CD8-positive, alpha-beta T cell (primary cell): ENCODE measurements at regions of chr18 and their contacts with region 1.

Region 1: DNA sequence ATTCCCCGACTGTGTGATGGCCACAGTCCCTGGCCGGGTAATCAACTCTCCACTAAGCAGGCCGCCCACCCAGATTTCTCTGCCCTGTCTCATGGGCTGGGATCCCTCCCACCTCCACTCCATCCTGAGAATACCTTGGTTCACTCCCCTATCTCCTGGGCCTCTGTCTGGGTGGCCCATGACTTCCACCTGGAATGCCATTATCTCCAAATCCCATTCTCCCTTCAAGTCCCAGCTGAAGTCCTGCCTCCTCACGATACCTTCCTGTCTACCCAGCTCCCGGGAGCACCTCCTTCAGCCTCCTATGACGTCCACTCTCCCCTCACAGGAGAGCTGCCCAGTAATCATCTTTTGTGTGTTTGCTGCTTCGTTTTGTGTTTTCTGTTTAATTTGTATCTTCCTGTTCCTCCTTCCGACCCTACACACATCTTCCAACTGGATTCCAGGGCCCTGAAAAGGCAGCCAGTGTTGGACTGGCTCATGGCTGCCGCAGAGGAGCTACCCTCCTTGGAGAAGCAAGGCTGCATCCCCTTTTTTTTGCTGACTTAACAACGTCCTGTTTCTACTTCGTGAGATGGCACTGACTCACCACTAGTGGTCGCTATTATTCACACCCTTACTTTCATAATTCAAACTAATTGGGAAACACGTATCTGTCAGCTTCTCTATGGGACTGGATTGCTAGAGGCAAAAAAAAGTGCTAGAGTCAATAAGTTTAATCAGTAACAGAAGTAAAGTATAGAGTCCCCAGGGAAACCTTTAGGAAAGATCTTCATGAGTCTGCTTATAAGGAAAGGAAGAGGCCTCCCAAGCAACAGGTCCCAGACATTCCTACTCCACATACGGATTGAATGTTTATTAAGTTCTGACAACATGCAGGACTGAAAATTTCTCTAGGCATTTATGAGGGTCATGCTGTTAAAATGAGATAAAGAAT is 171.9 kb upstream of the GATA6 start:
- DNase-seq: peak in 2 of 9 experiments; percentile 47 to 59
- ATAC-seq: peak; percentile 36
- H3K4me3 ChIP-seq: no peak overlapping the region
- H3K4me3 Mint-ChIP-seq: no peak overlapping the region
- H3K27ac ChIP-seq: no peak overlapping the region
- H3K27ac Mint-ChIP-seq: no peak overlapping the region
- H3K4me1 ChIP-seq: no peaks in the 10 kb centered on the region
- H3K4me1 Mint-ChIP-seq: peaks cover 2% of the 10 kb centered on the region
- H3K27me3 ChIP-seq: no peaks in the 10 kb centered on the region
- H3K27me3 Mint-ChIP-seq: peaks cover 6% of the 10 kb centered on the region
- CTCF ChIP-seq: peak; percentile 72

Region 2: DNA sequence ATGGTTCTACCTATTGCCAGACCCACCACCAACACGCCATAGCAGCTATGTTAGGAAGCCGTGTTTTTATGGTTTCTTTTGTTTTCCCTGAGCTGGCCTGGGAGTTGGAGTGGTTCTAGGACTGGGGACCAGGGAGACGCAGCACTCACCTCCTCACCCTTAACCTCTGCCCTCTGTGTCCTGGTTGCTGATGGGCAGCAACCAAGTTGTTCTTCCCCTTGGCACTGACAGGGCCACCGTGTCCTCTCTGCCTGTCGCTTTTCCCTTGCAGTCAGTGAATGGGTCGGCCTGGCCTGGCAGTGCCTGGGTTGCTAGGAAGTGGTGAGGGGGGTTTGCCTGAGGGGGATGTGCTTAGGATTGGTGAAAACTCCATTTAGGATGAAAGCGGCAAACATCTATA is 25.2 kb before region 1 on chr18:
- CTCF ChIA-PET with region 1: no interaction called
- POLR2A ChIA-PET with region 1: no interaction called
- intact Hi-C with region 1: no loop called
- DNase-seq: no peak
- ATAC-seq: no peak
- H3K4me3 ChIP-seq: no peak overlapping the region
- H3K4me3 Mint-ChIP-seq: no peak overlapping the region
- H3K27ac ChIP-seq: no peak overlapping the region
- H3K27ac Mint-ChIP-seq: no peak overlapping the region
- H3K4me1 ChIP-seq: no peaks in the 10 kb centered on the region
- H3K4me1 Mint-ChIP-seq: no peaks in the 10 kb centered on the region
- H3K27me3 ChIP-seq: no peaks in the 10 kb centered on the region
- H3K27me3 Mint-ChIP-seq: peaks cover 2% of the 10 kb centered on the region
- CTCF ChIP-seq: no peak

Region 3: GRCh38 chr18:22040533-22040932 is 43.1 kb after region 1 on chr18:
- CTCF ChIA-PET with region 1: no interaction called
- POLR2A ChIA-PET with region 1: no interaction called
- intact Hi-C with region 1: no loop called
- DNase-seq: no peak
- ATAC-seq: no peak
- H3K4me3 ChIP-seq: no peak overlapping the region
- H3K4me3 Mint-ChIP-seq: no peak overlapping the region
- H3K27ac ChIP-seq: no peak overlapping the region
- H3K27ac Mint-ChIP-seq: no peak overlapping the region
- H3K4me1 ChIP-seq: no peaks in the 10 kb centered on the region
- H3K4me1 Mint-ChIP-seq: no peaks in the 10 kb centered on the region
- H3K27me3 ChIP-seq: no peaks in the 10 kb centered on the region
- H3K27me3 Mint-ChIP-seq: peaks cover 2% of the 10 kb centered on the region
- CTCF ChIP-seq: no peak

Region 4: GRCh38 chr18:22378672-22379282 is 381.3 kb after region 1 on chr18:
- CTCF ChIA-PET with region 1: no interaction called
- POLR2A ChIA-PET with region 1: no interaction called
- intact Hi-C with region 1: loop called in 1 of 2 experiments (anchors 5 kb)
- DNase-seq: peak in 7 of 9 experiments; percentile 4 to 71 (median 33)
- ATAC-seq: peak; percentile 84
- H3K4me3 ChIP-seq: no peak overlapping the region
- H3K4me3 Mint-ChIP-seq: no peak overlapping the region
- H3K27ac ChIP-seq: no peak overlapping the region
- H3K27ac Mint-ChIP-seq: no peak overlapping the region
- H3K4me1 ChIP-seq: no peaks in the 10 kb centered on the region
- H3K4me1 Mint-ChIP-seq: no peaks in the 10 kb centered on the region
- H3K27me3 ChIP-seq: no peaks in the 10 kb centered on the region
- H3K27me3 Mint-ChIP-seq: peaks cover 3% of the 10 kb centered on the region
- CTCF ChIP-seq: no peak

Region 5: DNA sequence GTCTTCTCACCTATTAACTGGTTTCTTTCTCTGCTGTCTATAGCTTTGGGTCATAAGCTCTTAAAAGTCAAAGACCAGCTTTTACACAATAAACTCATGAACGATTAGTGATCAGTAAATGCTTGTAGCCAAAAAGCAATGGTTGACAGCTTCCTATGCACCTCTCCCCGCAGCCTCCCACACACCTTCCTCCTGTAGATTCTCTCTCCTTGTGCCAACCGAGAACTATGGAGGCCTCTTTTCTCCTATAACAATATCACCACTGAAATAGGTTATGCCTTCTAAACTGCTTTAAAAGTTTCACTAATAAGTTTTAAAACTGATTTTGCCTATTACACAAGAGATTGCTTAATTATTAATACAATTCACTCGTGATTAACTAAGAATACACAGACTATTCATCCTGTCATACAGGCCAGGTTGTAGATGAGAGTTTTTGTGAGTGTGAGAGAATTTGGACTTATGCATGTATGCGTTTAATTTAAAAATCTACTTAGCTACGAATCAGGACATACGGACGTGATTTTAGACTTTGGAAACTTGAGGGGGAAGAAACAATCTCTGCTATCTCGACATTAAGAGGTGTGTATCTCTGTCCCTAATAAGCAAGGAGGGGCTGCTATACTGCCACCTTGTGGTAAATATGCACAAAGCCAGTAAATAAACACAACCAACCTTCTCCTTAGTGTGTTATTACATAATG is 706.6 kb after region 1 on chr18:
- CTCF ChIA-PET with region 1: interaction called, 3 read pairs
- POLR2A ChIA-PET with region 1: no interaction called
- intact Hi-C with region 1: loop called in 1 of 2 experiments (anchors 2 kb)
- DNase-seq: peak in 3 of 9 experiments; percentile 8 to 58 (median 44)
- ATAC-seq: no peak
- H3K4me3 ChIP-seq: no peak overlapping the region
- H3K4me3 Mint-ChIP-seq: no peak overlapping the region
- H3K27ac ChIP-seq: no peak overlapping the region
- H3K27ac Mint-ChIP-seq: no peak overlapping the region
- H3K4me1 ChIP-seq: no peaks in the 10 kb centered on the region
- H3K4me1 Mint-ChIP-seq: no peaks in the 10 kb centered on the region
- H3K27me3 ChIP-seq: no peaks in the 10 kb centered on the region
- H3K27me3 Mint-ChIP-seq: peaks cover 8% of the 10 kb centered on the region
- CTCF ChIP-seq: peak; percentile 78